ENCODE measurements at regions of chr18 and their contacts with region 1.

Region 1: DNA sequence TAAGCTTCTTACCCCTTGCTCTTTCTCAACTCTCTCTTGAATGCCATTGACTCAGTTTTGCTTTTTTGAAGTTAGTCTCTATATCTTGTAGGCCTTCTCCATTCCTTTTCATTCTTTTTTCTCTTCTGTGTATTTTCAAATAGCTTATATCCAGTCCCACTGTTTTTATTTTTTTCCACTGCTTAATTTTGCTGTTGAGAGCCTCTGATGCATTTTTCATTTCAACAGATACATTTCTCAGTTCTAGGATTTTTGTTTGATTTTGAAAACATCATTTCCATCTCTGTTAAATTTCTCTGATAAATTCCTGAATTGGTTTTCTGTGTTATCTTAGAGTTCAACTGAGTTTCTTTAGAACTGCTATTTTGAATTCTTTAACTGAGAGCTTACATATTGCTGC is 45.9 kb downstream of the MIB1 start:
- DNase-seq: no peak
- ATAC-seq: no peak
- H3K4me3 Mint-ChIP-seq: no peak overlapping the region
- H3K27ac Mint-ChIP-seq: no peak overlapping the region
- H3K4me1 Mint-ChIP-seq: no peaks in the 10 kb centered on the region
- H3K27me3 Mint-ChIP-seq: no peaks in the 10 kb centered on the region

Region 2: DNA sequence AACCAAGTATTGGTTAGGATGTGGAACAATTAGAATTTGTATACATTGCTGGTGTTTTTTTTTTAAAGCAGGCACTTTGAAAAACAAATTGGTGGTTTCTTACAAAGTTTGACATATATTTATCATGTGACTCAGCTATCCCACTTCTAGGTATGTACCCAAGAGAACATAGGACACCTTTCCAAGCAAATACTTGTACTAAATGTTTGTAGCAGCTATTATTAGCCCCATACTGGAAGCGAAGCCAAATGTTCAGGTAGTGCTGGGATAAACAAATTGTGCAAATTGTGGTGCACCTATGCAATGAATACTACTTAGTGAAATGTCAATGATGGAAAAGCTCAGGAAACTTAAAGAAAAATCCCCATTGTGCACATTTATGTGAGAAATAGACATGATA is 55.0 kb after region 1 on chr18:
- CTCF ChIA-PET with region 1: no interaction called
- POLR2A ChIA-PET with region 1: no interaction called
- intact Hi-C with region 1: loop called in 1 of 2 experiments (anchors 5 kb)
- DNase-seq: no peak
- ATAC-seq: no peak
- H3K4me3 Mint-ChIP-seq: no peak overlapping the region
- H3K27ac Mint-ChIP-seq: no peak overlapping the region
- H3K4me1 Mint-ChIP-seq: no peaks in the 10 kb centered on the region
- H3K27me3 Mint-ChIP-seq: no peaks in the 10 kb centered on the region

Region 3: GRCh38 chr18:21857871-21858270 is 71.3 kb after region 1 on chr18:
- CTCF ChIA-PET with region 1: no interaction called
- POLR2A ChIA-PET with region 1: no interaction called
- intact Hi-C with region 1: no loop called
- DNase-seq: no peak
- ATAC-seq: no peak
- H3K4me3 Mint-ChIP-seq: no peak overlapping the region
- H3K27ac Mint-ChIP-seq: no peak overlapping the region
- H3K4me1 Mint-ChIP-seq: peaks cover 2% of the 10 kb centered on the region
- H3K27me3 Mint-ChIP-seq: no peaks in the 10 kb centered on the region

Region 4: DNA sequence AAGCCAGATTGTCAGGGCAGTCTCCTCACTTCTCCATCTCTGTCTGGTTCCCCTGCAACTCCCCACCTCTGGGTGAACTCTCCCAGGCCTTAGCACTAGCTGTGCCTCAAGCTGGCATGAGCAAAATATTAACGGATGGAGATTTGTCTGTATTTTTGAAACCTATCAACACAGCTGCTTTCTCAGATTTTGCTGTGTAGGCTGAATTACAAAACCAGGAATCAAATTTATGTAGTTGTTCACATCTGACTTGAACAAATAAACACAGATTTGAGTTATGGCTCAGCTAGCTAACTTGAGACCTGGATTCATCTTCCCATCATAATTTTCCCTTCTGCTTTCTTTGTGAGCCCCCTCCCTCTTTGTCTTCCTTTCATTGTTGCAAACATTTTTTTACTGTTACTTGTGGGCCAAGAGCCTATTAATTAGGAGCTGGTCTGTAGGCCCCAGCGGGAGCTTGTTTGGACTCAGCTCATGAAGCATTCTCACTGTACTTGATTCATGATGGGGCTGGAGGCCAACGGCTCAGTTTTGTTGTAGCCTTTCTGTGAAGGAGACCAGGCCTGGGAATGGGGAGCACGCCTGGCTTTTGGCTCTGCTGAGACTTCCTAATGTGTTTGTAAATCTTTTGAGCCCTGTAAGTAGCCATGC is 218.8 kb after region 1 on chr18:
- CTCF ChIA-PET with region 1: no interaction called
- POLR2A ChIA-PET with region 1: no interaction called
- intact Hi-C with region 1: no loop called
- DNase-seq: no peak
- ATAC-seq: no peak
- H3K4me3 Mint-ChIP-seq: no peak overlapping the region
- H3K27ac Mint-ChIP-seq: no peak overlapping the region
- H3K4me1 Mint-ChIP-seq: no peaks in the 10 kb centered on the region
- H3K27me3 Mint-ChIP-seq: no peaks in the 10 kb centered on the region

Measured in activated CD4-positive, alpha-beta T cell treated with anti-CD3 and anti-CD28 coated beads for 36 hours (primary cell).